Activated CD4-positive, alpha-beta memory T cell treated with anti-CD3 and anti-CD28 coated beads for 36 hours (primary cell): ENCODE measurements at regions of chr5 and their contacts with region 1.

Region 1: GRCh38 chr5:172179361-172179989 is 8.5 kb downstream of the STK10 start:
- DNase-seq: peak; percentile 67
- H3K4me3 Mint-ChIP-seq: peak overlapping the region; percentile 73
- H3K27ac Mint-ChIP-seq: peak overlapping the region; percentile 99
- H3K4me1 Mint-ChIP-seq: peaks cover 88% of the 10 kb centered on the region
- H3K27me3 Mint-ChIP-seq: no peaks in the 10 kb centered on the region

Region 2: DNA sequence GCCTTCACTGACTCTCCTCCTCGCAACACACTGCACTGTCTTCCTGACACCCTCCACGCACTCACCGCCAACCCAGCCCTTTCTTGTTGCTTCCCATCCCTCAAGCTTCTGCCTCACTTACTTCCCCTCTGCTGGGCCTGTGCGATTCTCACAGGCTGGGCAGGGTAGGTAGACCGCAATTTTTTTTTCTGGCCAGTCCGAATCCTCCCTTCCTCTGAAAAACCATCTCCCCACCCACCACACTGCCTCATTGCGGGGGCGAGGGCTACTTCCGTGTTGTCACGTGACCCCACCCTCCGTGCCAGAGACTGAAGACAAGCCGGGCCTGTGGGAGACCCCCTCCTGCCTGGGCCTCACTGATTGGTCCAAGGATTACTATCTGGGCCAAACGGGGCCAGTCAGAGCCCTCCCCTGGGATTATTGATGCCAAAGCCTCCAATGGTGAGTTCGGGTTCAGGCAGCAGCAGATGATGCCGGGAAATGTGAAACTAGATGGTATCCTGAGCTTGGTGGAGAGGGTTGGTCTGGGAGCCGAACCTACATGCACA is 64.5 kb before region 1 on chr5:
- CTCF ChIA-PET with region 1: interaction called, 12 read pairs
- POLR2A ChIA-PET with region 1: interaction called, 70 read pairs
- intact Hi-C with region 1: loop called (anchors 1 kb)
- DNase-seq: peak; percentile 95
- H3K4me3 Mint-ChIP-seq: peak overlapping the region; percentile 83
- H3K27ac Mint-ChIP-seq: peak overlapping the region; percentile 99
- H3K4me1 Mint-ChIP-seq: peaks cover 73% of the 10 kb centered on the region
- H3K27me3 Mint-ChIP-seq: no peaks in the 10 kb centered on the region

Region 3: DNA sequence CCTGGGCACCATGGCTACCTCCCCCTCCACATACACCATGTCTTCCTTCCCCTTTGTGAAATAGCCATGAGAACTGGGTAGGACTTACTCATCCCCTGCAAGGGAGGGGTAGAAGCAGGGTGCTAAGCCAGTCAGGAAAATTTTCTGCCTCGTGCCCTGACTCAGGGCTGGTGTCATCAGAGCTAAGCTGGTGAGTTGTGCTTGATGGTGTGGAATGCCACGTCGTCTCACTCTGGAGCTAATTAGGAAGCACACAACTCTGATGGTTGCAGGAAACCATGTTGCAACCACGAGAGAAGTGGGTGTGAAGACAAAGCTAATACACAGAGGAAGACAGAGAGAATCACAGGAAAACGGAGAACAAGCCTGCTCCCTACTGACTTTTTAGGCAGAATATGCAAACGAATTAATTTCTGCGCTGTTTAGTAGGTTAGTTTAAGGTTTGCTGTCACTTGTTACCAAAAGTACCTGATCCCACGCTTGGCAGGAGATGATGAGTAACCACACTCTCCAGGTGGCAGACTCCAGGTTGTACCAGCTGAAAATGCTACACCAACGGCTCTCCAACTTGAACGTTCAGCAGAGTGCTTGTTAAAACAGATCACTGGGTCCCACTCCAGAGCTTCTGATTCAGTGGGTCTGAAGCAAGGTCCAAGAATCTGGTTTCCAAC is 46.0 kb before region 1 on chr5:
- CTCF ChIA-PET with region 1: no interaction called
- POLR2A ChIA-PET with region 1: interaction called, 3 read pairs
- intact Hi-C with region 1: loop called (anchors 1 kb)
- DNase-seq: peak; percentile 85
- H3K4me3 Mint-ChIP-seq: peak overlapping the region; percentile 43
- H3K27ac Mint-ChIP-seq: peak overlapping the region; percentile 92
- H3K4me1 Mint-ChIP-seq: peaks cover 64% of the 10 kb centered on the region
- H3K27me3 Mint-ChIP-seq: no peaks in the 10 kb centered on the region

Region 4: GRCh38 chr5:172164769-172165212 is 14.7 kb before region 1 on chr5:
- CTCF ChIA-PET with region 1: interaction called, 4 read pairs
- POLR2A ChIA-PET with region 1: interaction called, 12 read pairs
- intact Hi-C with region 1: no loop called
- DNase-seq: no peak
- H3K4me3 Mint-ChIP-seq: no peak overlapping the region
- H3K27ac Mint-ChIP-seq: peak overlapping the region; percentile 67
- H3K4me1 Mint-ChIP-seq: peaks cover 75% of the 10 kb centered on the region
- H3K27me3 Mint-ChIP-seq: no peaks in the 10 kb centered on the region

Region 5: DNA sequence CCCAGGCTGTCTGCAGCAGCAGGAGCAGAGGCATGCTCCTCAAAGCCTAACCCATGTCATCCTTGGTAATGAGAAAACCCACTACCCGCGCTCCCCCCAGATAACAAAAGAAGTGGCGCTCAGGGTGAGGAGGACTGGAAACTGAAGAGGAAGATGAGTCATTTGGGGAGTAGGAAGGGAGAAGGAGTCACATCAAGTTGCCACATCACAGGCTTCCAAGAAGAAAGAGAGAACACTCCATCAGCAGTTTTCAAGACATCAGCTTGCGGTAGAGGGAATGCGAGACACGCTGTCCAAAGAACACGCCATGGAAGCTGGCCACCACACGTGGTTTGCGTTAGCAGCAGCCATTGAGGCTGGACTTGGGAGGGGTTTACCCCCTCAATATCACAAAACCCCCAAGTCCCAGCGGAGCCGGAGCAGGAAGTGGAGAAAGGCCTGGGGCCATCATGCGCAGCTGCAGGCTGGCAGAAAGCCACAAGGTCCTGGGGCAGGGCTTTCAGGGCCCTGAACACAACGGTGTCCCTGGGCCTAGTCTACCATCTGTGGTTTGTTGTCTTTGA is 233.3 kb after region 1 on chr5:
- CTCF ChIA-PET with region 1: no interaction called
- POLR2A ChIA-PET with region 1: no interaction called
- intact Hi-C with region 1: loop called (anchors 5 kb)
- DNase-seq: peak; percentile 51
- H3K4me3 Mint-ChIP-seq: no peak overlapping the region
- H3K27ac Mint-ChIP-seq: peak overlapping the region; percentile 2
- H3K4me1 Mint-ChIP-seq: peaks cover 22% of the 10 kb centered on the region
- H3K27me3 Mint-ChIP-seq: peaks cover 9% of the 10 kb centered on the region